Activated T-helper 1 cell treated with anti-CD3 and anti-CD28 coated beads, Interleukin-12 subunit alpha, Interleukin-12 subunit beta, Interleukin-2, Interleukin-4 antibody, amounts not matched to agents 30 ng/mL and 10 ng/mL and 1 ng/mL, durations not matched to agents 14 hours and 24 hours and 36 hours (primary cell): ENCODE measurements at regions of chr3 and their contacts with region 1.

Region 1: DNA sequence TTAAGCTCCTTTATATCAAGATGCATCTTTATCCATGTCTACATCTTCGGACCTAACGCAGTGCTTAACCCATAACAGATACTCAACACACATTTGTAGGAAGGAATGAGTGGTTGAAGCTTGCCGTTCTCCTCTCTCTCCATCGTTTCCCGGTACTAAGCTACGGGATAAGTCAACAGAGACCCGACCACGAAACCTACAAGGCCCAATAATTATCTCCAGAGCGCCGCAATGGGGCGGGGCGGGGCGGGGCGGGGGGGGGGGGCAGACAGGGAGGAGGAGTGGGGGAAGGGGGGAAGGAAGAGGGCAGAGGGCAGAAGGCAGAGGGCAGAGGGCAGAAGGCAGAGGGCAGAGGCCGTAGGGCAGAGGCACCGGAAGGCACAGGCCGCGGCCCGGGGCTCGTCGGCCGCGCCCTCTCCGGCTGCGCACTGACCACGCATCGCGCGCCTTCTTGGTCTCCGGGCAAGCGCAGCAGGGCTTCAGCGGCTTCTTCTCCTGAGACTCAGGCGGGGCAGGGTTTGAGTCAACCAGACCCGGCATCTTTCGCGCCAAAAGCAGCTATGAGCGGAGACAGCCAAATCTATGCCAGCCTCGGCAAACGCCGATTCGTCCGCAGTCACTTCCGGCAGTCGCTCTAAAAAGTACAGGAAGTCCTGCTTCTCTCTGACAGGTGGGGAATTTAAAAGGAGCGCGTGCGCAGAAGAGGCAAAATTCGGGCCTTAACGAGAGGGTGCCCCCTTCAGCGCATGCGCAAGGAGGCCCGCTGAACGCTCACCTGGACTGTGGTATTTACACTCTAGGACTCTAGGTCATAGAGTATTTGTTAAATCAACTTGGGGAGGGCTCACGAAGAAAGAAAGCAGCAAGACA is at the start of gene COX17:
- DNase-seq: peak; percentile 95
- H3K4me3 Mint-ChIP-seq: peak within 1 kb of the TSS; percentile 91
- H3K27ac Mint-ChIP-seq: peak within 1 kb of the TSS; percentile 96
- H3K4me1 Mint-ChIP-seq: peaks cover 44% of the 10 kb centered on the region
- H3K27me3 Mint-ChIP-seq: peaks cover 2% of the 10 kb centered on the region
- total RNA-seq, gene COX17: 62.2 and 70.7 TPM in 2 replicates

Region 2: DNA sequence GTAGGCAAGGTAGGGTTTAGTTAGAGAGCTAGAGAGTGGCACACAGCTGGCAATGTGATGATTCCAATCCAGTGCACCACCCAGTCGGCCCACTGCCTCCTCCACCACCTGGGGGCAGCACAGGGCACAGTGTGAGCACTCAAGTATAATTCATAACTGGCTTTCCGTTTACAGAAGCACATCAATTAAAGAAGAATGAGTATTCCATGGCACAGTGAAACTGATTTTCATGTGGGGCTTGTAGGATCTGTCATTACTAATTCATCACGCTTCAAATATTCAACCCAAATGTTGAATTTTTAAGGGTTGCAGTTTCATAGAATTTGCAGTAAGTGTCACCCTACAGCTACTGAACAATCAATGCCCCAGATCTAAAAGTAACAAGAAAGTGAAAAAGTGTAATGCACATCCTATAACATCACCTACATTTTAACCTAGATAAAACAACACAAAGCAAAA is 792.2 kb before region 1 on chr3:
- intact Hi-C with region 1: loop called (anchors 1 kb)
- DNase-seq: peak; percentile 57
- H3K4me3 Mint-ChIP-seq: no peak overlapping the region
- H3K27ac Mint-ChIP-seq: no peak overlapping the region
- H3K4me1 Mint-ChIP-seq: peaks cover 8% of the 10 kb centered on the region
- H3K27me3 Mint-ChIP-seq: peaks cover 6% of the 10 kb centered on the region

Region 3: GRCh38 chr3:119240591-119241434 is 436.2 kb before region 1 on chr3 and contains the start of gene B4GALT4:
- intact Hi-C with region 1: loop called (anchors 1 kb)
- DNase-seq: peak; percentile 75
- H3K4me3 Mint-ChIP-seq: peak within 1 kb of the TSS; percentile 87
- H3K27ac Mint-ChIP-seq: peak within 1 kb of the TSS; percentile 90
- H3K4me1 Mint-ChIP-seq: peaks cover 40% of the 10 kb centered on the region
- H3K27me3 Mint-ChIP-seq: no peaks in the 10 kb centered on the region
- total RNA-seq, gene B4GALT4: 14.1 and 18.6 TPM in 2 replicates

Region 4: DNA sequence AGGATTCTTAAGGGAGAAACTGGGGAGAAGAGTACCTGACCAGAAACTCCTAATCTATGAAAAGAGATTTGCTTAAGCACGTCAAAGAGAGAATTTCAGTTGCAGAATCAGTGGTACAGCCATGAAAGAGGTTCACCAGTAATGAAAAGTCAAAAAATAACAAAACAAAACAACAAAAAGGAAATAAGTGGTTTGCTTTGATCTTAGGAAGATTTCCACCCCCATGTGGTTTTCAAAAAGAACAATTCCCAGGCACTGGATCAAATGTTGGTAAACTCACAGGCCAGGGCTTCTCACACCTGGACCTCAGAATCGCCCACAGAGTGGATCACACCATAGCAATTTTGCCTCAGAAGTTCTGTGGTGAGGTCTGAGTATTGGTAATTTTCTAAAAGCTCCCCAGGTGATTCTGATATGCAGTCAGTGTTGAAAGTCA is 281.1 kb before region 1 on chr3:
- intact Hi-C with region 1: loop called (anchors 2 kb)
- DNase-seq: peak; percentile 2
- H3K4me3 Mint-ChIP-seq: no peak overlapping the region
- H3K27ac Mint-ChIP-seq: peak overlapping the region; percentile 63
- H3K4me1 Mint-ChIP-seq: peaks cover 36% of the 10 kb centered on the region
- H3K27me3 Mint-ChIP-seq: peaks cover 9% of the 10 kb centered on the region

Region 5: GRCh38 chr3:119508172-119508845 is 168.7 kb before region 1 on chr3:
- intact Hi-C with region 1: loop called (anchors 1 kb)
- DNase-seq: peak; percentile 31
- H3K4me3 Mint-ChIP-seq: peak overlapping the region; percentile 5
- H3K27ac Mint-ChIP-seq: peak overlapping the region; percentile 89
- H3K4me1 Mint-ChIP-seq: peaks cover 39% of the 10 kb centered on the region
- H3K27me3 Mint-ChIP-seq: no peaks in the 10 kb centered on the region

Region 6: GRCh38 chr3:119628816-119629445 is 48.1 kb before region 1 on chr3:
- intact Hi-C with region 1: loop called (anchors 2 kb)
- DNase-seq: no peak
- H3K4me3 Mint-ChIP-seq: peak overlapping the region; percentile 8
- H3K27ac Mint-ChIP-seq: no peak overlapping the region
- H3K4me1 Mint-ChIP-seq: peaks cover 41% of the 10 kb centered on the region
- H3K27me3 Mint-ChIP-seq: peaks cover 2% of the 10 kb centered on the region

Region 7: GRCh38 chr3:119794971-119795612 is 118.1 kb after region 1 on chr3:
- intact Hi-C with region 1: no loop called
- DNase-seq: no peak
- H3K4me3 Mint-ChIP-seq: no peak overlapping the region
- H3K27ac Mint-ChIP-seq: no peak overlapping the region
- H3K4me1 Mint-ChIP-seq: no peaks in the 10 kb centered on the region
- H3K27me3 Mint-ChIP-seq: peaks cover 14% of the 10 kb centered on the region

Region 8: GRCh38 chr3:119880966-119881365 is 204.0 kb after region 1 on chr3:
- intact Hi-C with region 1: no loop called
- DNase-seq: no peak
- H3K4me3 Mint-ChIP-seq: no peak overlapping the region
- H3K27ac Mint-ChIP-seq: no peak overlapping the region
- H3K4me1 Mint-ChIP-seq: no peaks in the 10 kb centered on the region
- H3K27me3 Mint-ChIP-seq: no peaks in the 10 kb centered on the region

Region 9: DNA sequence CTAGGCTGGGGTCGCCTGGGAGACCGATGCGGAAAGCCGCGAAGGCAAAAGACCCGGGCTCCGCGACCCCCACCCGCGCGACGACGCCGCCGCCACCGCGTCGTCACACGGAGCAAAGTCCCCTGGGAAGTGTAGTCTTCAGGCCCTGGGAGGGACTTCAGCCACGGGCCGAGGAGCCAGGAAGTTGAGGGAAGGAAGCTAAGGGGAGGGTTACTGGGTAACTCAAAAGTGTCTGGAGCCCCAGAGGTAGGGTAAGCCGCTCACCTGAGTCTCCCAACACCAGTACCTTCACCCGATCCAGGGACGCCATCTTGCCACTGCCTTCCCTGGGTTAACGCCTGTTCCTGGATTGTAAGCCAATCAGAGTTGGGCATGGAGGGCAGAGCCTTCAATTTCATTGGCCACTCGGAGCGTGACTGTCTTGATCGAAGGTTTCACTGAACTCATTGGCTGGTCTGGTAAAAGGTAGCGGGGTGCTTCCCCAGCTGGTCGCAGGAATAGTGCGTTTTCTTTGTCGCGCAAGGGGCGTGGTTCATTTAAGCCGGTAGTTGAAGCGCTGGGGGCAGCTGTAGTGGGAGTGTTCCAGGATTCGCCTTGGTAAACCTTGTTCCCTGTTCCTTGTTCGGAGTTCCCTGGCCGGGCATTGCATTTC is 1065.3 kb after region 1 on chr3 and contains the starts of genes GTF2E1 and RABL3:
- intact Hi-C with region 1: loop called (anchors 1 kb)
- DNase-seq: peak; percentile 95
- H3K4me3 Mint-ChIP-seq: peak within 1 kb of the TSS; percentile 84
- H3K27ac Mint-ChIP-seq: peak within 1 kb of the TSS; percentile 89
- H3K4me1 Mint-ChIP-seq: peaks cover 22% of the 10 kb centered on the region
- H3K27me3 Mint-ChIP-seq: no peaks in the 10 kb centered on the region
- total RNA-seq, gene GTF2E1: 25.3 and 29.2 TPM in 2 replicates
- total RNA-seq, gene RABL3: 24.3 and 25.6 TPM in 2 replicates